Tibial artery (tissue), 4 donors: ENCODE measurements at regions of chr11 and their contacts with region 1.

Region 1: DNA sequence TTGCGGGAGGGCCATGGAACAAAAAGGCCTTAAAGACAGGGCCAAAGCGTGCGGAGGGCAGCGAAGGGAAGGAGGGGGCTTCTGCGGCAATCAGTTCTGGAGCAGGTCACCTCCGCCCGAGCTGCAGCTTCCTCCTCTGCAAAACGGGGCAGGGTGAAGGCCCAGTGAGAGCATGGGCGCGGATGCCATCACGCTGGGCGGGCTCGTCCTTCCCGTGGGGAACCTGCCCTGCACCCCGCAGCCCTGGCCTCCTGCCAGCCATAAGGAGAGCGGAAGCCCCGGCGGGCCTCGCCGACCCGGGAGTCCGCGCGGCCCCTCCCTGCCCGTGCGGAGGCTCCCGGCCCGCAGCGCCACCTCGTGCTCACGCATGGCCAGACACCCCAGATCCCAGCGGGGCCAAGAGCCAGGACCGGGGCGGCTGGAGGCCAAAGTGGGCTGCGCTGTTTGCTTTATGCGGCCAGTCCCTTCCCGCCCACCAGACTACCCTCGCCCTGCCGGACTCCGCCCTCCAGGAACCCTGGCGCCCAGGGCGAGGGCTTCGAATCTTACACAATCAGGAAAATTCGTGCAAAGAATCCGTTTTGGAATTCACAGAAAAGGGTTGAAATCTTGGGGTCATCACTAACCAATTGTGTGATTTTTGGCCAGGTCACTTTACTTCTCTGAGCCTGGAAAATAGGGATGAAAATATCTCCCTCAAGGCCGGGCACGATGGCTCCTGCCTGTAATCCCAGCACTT is 16.1 kb downstream of the TSKU start:
- DNase-seq: peak; percentile 85 to 90
- H3K4me3 ChIP-seq: peak overlapping the region; percentile 31 to 42
- H3K27ac ChIP-seq: peak overlapping the region; percentile 42 to 63
- H3K4me1 ChIP-seq: peaks cover 0 to 60% (median 25%) of the 10 kb centered on the region in 4 donors
- H3K27me3 ChIP-seq: no peaks in the 10 kb centered on the region
- CTCF ChIP-seq: peak; percentile 94 to 95

Region 2: GRCh38 chr11:76074148-76075095 is 724.8 kb before region 1 on chr11:
- intact Hi-C with region 1: no loop called
- DNase-seq: no peak
- H3K4me3 ChIP-seq: no peak overlapping the region
- H3K27ac ChIP-seq: no peak overlapping the region
- H3K4me1 ChIP-seq: peaks cover 0 to 36% (median 4%) of the 10 kb centered on the region in 4 donors
- H3K27me3 ChIP-seq: no peaks in the 10 kb centered on the region
- CTCF ChIP-seq: no peak

Region 3: DNA sequence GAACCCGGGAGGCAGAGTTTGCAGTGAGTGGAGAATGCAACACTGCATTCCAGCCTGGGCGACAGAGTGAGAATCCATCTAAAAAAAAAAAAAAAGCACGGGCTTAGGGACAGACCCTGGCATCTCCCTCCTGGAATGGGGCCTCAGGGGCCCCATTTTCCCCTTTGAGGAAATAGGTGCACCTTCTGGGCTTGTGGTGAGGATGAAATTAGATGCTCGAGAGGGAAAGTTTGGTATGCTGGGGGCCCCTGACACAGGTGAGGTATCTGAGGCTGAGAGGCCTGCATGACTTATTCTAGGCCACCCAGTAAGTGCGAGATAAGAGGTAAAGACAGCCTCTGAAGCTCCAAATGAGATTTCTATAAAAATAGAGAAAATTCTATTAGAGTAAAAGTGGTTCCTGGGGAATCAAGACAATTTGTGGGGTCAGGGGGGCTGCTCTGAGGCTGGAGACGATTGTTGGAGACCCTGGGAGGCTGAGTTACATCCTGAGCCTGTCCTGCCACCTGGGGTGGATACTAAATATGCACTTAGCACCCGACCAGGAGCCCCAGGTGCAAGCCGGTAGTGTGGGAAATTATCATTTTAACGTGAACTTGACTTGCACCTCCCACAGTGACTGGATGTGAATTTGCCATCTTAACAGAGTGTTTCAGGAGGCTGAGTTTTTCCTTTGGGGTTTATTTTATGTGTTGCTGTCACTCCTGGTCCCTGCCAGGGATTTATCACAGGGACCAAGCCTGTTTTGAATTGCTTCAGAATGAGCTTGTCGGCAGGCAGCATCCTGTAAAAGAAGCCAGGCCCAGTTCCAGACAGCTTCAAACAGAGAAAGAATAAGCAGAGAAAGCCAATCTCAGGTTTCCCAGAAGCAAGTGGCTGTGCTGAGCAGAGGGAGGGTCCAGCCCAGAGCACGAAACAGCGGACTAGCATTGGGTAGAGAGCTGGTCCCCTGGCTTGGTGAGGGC is 64.5 kb before region 1 on chr11:
- intact Hi-C with region 1: loop called (anchors 2 kb)
- DNase-seq: no peak
- H3K4me3 ChIP-seq: no peak overlapping the region
- H3K27ac ChIP-seq: no peak overlapping the region
- H3K4me1 ChIP-seq: no peaks in the 10 kb centered on the region
- H3K27me3 ChIP-seq: no peaks in the 10 kb centered on the region
- CTCF ChIP-seq: no peak